Head of caudate nucleus (tissue), 42 donors: ENCODE measurements at regions of chr14 and their contacts with region 1.

Region 1: DNA sequence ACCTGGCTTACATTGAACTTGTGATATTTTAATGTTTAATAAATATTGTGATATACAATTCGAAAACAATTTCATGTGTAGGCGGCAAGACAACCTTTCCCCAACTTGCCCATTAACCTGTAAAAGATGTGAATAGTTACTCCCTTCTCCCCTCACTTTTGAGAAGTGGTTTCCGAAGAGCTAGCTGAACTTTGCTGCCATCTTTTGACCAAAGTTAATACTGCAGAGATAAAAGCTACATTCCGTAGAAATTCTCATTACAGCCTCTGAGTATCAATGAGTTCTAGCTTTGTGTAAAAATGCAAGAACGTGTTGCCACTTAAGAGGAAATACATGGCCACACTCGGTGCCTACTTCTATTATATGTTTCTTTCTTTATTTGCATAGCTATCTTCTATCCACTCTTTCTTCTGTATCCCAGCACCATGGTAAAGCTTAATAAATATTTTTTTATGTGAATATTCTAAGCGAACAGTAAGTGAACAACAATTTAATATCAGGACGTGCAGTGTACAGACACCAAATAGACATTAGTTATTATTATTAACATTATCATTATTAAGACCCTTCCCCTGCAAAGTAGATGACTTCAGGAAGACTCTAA is 105.1 kb upstream of the TMEM260 start:
- DNase-seq: peak in 2 of 42 donors; percentile 11 to 60

Region 2: DNA sequence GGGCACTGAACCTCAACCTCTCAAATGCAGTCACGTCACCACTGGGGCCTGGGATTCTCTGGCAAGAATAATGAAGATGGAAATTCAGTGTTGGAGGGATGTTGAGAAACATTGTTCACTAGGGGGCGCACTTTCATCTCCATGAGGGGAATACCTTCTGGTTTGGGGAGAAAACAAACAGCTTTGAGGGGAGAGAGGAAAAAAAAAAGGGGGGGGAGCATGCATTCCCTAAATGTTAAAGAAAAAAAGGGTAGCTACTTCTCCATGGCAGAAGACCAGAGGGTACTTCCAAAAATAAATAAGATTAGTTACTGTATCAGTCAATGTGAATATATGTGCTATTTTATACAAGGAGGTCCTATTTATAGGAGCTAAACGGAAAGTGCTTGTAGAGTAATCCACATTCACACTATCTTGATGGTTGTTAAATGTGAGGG is 1028.3 kb before region 1 on chr14:
- intact Hi-C with region 1: loop called (anchors 10 kb)
- DNase-seq: peak in 38 of 42 donors; percentile 22 to 89 (median 68)

Region 3: GRCh38 chr14:55707365-55707804 is 767.1 kb before region 1 on chr14:
- intact Hi-C with region 1: loop called (anchors 5 kb)
- DNase-seq: peak in 1 of 42 donors; percentile 24